CD4-positive, alpha-beta T cell (primary cell): ENCODE measurements at regions of chr17 and their contacts with region 1.

Region 1: GRCh38 chr17:79728226-79728907 is 2.4 kb upstream of the ENPP7 start:
- DNase-seq: peak; percentile 70 to 94 (median 77)
- ATAC-seq: peak; percentile 95
- H3K4me3 ChIP-seq: peak overlapping the region; percentile 19
- H3K4me3 Mint-ChIP-seq: peak overlapping the region; percentile 69
- H3K27ac ChIP-seq: no peak overlapping the region
- H3K27ac Mint-ChIP-seq: peak overlapping the region; percentile 81
- H3K4me1 ChIP-seq: peaks cover 29% of the 10 kb centered on the region
- H3K4me1 Mint-ChIP-seq: peaks cover 15% of the 10 kb centered on the region
- H3K27me3 ChIP-seq: no peaks in the 10 kb centered on the region
- H3K27me3 Mint-ChIP-seq: no peaks in the 10 kb centered on the region
- CTCF ChIP-seq: no peak

Region 2: GRCh38 chr17:79563237-79564013 is 164.9 kb before region 1 on chr17:
- CTCF ChIA-PET with region 1: no interaction called
- POLR2A ChIA-PET with region 1: no interaction called
- intact Hi-C with region 1: no loop called
- DNase-seq: no peak
- ATAC-seq: no peak
- H3K4me3 ChIP-seq: no peak overlapping the region
- H3K4me3 Mint-ChIP-seq: no peak overlapping the region
- H3K27ac ChIP-seq: no peak overlapping the region
- H3K27ac Mint-ChIP-seq: no peak overlapping the region
- H3K4me1 ChIP-seq: no peaks in the 10 kb centered on the region
- H3K4me1 Mint-ChIP-seq: no peaks in the 10 kb centered on the region
- H3K27me3 ChIP-seq: peaks cover 11 to 17% of the 10 kb centered on the region in 2 experiments
- H3K27me3 Mint-ChIP-seq: peaks cover 36% of the 10 kb centered on the region
- CTCF ChIP-seq: no peak

Region 3: DNA sequence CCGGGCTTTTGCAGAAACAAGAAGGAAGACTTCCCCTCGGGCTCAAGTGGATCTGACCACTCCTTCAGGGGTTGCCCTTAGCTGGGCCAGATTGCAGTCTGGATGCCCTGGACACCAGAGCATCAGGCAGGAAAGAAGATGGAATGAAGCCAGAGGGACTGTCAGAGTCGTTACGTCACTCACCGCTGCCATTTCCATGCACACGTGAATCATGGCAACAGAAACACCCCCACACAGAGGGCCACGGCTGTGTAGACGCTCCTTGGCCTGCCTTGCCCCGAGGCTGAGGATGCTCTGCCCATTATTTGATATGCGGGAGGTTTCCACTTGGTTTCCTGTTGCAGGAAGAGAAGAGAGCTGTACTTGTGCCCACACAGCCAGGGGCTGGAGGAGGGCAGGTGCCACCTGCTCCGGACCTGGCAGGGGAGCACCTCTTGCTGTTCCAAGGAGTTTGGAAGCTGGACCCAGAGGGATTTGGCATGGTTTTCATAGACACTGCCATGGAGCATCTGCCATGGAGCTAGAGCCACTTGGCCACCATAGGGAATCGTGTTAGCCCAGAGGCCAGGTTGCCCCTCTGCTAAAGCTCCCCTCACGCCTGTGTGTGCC is 146.9 kb before region 1 on chr17:
- CTCF ChIA-PET with region 1: no interaction called
- POLR2A ChIA-PET with region 1: no interaction called
- intact Hi-C with region 1: no loop called
- DNase-seq: no peak
- ATAC-seq: no peak
- H3K4me3 ChIP-seq: no peak overlapping the region
- H3K4me3 Mint-ChIP-seq: no peak overlapping the region
- H3K27ac ChIP-seq: no peak overlapping the region
- H3K27ac Mint-ChIP-seq: no peak overlapping the region
- H3K4me1 ChIP-seq: no peaks in the 10 kb centered on the region
- H3K4me1 Mint-ChIP-seq: no peaks in the 10 kb centered on the region
- H3K27me3 ChIP-seq: peaks cover 6% of the 10 kb centered on the region in 2 experiments
- H3K27me3 Mint-ChIP-seq: peaks cover 30% of the 10 kb centered on the region
- CTCF ChIP-seq: no peak

Region 4: GRCh38 chr17:79741751-79742588 is 13.6 kb after region 1 on chr17:
- CTCF ChIA-PET with region 1: interaction called, 11 read pairs
- POLR2A ChIA-PET with region 1: no interaction called
- intact Hi-C with region 1: no loop called
- DNase-seq: peak; percentile 59 to 85 (median 70)
- ATAC-seq: peak; percentile 55
- H3K4me3 ChIP-seq: no peak overlapping the region
- H3K4me3 Mint-ChIP-seq: no peak overlapping the region
- H3K27ac ChIP-seq: no peak overlapping the region
- H3K27ac Mint-ChIP-seq: no peak overlapping the region
- H3K4me1 ChIP-seq: peaks cover 29% of the 10 kb centered on the region
- H3K4me1 Mint-ChIP-seq: peaks cover 14% of the 10 kb centered on the region
- H3K27me3 ChIP-seq: peaks cover 29 to 30% of the 10 kb centered on the region in 2 experiments
- H3K27me3 Mint-ChIP-seq: peaks cover 54% of the 10 kb centered on the region
- CTCF ChIP-seq: peak; percentile 94